ENCODE measurements at regions of chr12 and their contacts with region 1.

Region 1: DNA sequence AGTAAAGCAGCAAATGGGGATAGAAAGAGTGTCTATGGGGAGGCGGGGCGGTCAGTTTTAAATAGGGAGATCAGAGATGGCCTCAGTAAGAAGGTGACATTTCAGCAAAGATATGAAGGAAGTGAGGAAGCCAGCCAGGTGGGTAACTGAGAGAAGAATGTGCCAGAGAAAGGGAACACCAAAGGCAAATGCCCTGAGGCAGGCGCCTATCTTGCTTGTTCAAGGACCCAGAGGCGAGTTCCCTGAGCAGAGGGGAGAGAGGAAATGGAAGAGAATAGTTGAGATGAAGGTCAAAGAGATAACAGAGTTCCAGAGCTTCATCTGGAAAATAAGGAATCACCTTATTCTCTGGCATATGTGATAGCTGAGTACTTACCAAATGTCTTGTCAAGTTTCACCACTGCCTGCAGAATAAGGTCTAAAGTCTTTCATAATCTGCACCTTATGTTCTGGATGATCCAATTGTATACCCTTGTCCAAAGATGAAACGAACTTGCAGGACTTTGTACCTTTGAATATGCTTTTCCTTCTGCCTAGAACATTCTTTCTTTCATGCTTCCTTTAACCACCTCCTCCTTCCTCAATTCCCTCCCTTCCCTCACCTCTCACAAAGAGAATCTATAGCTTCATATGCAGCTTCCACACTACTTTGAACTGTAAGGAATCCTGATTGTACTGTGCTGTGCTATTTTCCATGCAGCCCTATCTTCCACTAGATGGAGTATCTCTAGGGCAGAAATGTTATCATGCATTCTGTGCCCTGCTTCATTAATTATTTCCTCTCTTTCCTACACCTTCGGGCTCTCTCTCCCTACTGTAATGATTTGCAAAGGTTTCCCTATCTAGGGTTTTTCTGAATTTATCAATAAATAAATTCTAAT is 38.5 kb downstream of the GNPTAB start:
- DNase-seq: no peak
- H3K4me3 Mint-ChIP-seq: no peak overlapping the region
- H3K27ac Mint-ChIP-seq: peak overlapping the region; percentile 0
- H3K4me1 Mint-ChIP-seq: peaks cover 48% of the 10 kb centered on the region
- H3K27me3 Mint-ChIP-seq: no peaks in the 10 kb centered on the region

Region 2: DNA sequence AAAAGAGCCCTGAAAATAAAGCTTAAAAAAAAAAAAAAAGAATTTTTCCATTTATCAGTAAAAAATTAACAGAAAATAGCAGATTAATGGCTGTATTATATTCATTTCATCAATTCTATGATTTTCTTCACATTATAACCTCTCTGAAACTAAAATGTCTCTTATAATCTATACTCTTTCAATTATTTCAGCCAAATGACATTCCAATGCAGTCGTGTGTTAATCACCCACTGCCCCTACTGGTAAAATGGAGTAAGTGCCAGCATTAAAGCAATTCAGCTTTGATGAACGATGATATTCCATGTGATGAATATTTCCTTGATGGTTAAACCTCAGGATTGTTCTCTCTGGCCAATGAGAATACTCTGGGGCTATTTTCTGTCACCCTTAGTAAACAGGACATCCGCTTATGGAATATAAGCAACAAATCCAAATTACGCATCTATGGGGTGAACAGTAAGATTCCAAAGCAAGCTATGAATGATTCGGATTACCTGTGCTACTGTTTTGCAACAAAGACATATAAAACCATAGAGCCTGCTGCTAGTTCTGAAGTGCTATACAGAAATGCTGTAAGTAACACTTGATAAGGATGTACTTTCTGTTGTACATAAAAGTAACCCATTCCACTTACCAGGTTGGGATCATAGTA is 32.8 kb before region 1 on chr12:
- CTCF ChIA-PET with region 1: no interaction called
- DNase-seq: no peak
- H3K4me3 Mint-ChIP-seq: no peak overlapping the region
- H3K27ac Mint-ChIP-seq: no peak overlapping the region
- H3K4me1 Mint-ChIP-seq: no peaks in the 10 kb centered on the region
- H3K27me3 Mint-ChIP-seq: no peaks in the 10 kb centered on the region

Region 3: DNA sequence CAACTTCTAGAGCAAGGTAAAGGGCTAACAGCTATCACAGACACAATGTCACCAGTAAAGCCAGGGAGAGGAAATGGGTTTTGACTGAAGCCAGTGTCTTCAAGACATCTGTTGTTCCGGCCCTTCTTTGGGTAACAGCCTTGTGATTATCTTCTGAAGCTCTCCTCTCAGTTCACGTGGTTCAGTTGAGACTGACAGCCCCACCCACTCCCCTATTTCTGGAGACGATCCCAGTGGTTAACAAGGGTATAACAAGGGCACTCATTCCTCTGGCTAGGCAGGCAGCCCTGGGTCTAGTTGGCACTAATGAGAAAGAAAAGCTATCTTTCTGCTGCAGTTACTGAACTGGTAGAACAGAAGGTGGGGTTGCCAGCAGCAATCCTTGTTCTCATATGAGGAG is 31.6 kb after region 1 on chr12:
- CTCF ChIA-PET with region 1: interaction called, 65 read pairs
- DNase-seq: peak; percentile 84
- H3K4me3 Mint-ChIP-seq: peak overlapping the region; percentile 22
- H3K27ac Mint-ChIP-seq: peak overlapping the region; percentile 86
- H3K4me1 Mint-ChIP-seq: peaks cover 87% of the 10 kb centered on the region
- H3K27me3 Mint-ChIP-seq: no peaks in the 10 kb centered on the region

Measured in activated naive CD4-positive, alpha-beta T cell treated with anti-CD3 and anti-CD28 coated beads, Interleukin-2, amount 10 ng/mL, durations not matched to agents 7 days and 5 days (primary cell).